Activated naive CD4-positive, alpha-beta T cell treated with anti-CD3 and anti-CD28 coated beads for 36 hours (primary cell): ENCODE measurements at regions of chr3 and their contacts with region 1.

Region 1: GRCh38 chr3:23800731-23801130 is 5.0 kb upstream of the UBE2E1 start:
- DNase-seq: no peak
- H3K4me3 Mint-ChIP-seq: no peak overlapping the region
- H3K27ac Mint-ChIP-seq: no peak overlapping the region
- H3K4me1 Mint-ChIP-seq: peaks cover 18% of the 10 kb centered on the region
- H3K27me3 Mint-ChIP-seq: peaks cover 7% of the 10 kb centered on the region

Region 2: DNA sequence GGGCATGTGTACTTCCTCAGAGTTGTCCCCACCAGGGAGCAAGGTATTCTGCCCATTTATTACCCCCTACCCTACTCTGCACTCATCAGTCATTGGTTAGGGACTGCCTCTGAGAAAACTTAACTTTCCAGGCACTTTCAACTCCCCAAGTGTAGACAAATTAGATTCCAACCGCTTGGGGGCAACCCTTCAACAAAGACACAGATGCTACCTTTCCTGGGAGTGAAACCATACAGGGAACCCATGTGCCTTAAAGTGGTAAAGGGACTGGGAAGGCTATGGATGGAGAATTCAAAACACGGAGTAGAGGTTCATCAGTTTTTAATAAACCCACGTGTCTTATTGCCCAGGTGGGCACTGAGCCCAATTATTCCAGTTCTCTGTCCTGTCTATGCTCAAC is 617.0 kb before region 1 on chr3:
- CTCF ChIA-PET with region 1: no interaction called
- intact Hi-C with region 1: loop called (anchors 5 kb)
- DNase-seq: peak; percentile 12
- H3K4me3 Mint-ChIP-seq: no peak overlapping the region
- H3K27ac Mint-ChIP-seq: no peak overlapping the region
- H3K4me1 Mint-ChIP-seq: no peaks in the 10 kb centered on the region
- H3K27me3 Mint-ChIP-seq: peaks cover 2% of the 10 kb centered on the region

Region 3: GRCh38 chr3:23546181-23546580 is 254.6 kb before region 1 on chr3:
- CTCF ChIA-PET with region 1: no interaction called
- intact Hi-C with region 1: no loop called
- DNase-seq: no peak
- H3K4me3 Mint-ChIP-seq: no peak overlapping the region
- H3K27ac Mint-ChIP-seq: no peak overlapping the region
- H3K4me1 Mint-ChIP-seq: no peaks in the 10 kb centered on the region
- H3K27me3 Mint-ChIP-seq: no peaks in the 10 kb centered on the region

Region 4: GRCh38 chr3:23726811-23727548 is 73.8 kb before region 1 on chr3:
- CTCF ChIA-PET with region 1: no interaction called
- intact Hi-C with region 1: loop called (anchors 1 kb)
- DNase-seq: peak; percentile 20
- H3K4me3 Mint-ChIP-seq: no peak overlapping the region
- H3K27ac Mint-ChIP-seq: no peak overlapping the region
- H3K4me1 Mint-ChIP-seq: peaks cover 9% of the 10 kb centered on the region
- H3K27me3 Mint-ChIP-seq: no peaks in the 10 kb centered on the region